ENCODE measurements at regions of chr5 and their contacts with region 1.

Region 1: GRCh38 chr5:159106569-159107282 is 7.0 kb upstream of the EBF1 start:
- DNase-seq: peak; percentile 83
- H3K4me3 ChIP-seq: peak overlapping the region; percentile 61
- H3K27ac ChIP-seq: peak overlapping the region; percentile 53
- H3K4me1 ChIP-seq: peaks cover 49% of the 10 kb centered on the region
- H3K27me3 ChIP-seq: peaks cover 83% of the 10 kb centered on the region
- CTCF ChIP-seq: peak; percentile 92

Region 2: DNA sequence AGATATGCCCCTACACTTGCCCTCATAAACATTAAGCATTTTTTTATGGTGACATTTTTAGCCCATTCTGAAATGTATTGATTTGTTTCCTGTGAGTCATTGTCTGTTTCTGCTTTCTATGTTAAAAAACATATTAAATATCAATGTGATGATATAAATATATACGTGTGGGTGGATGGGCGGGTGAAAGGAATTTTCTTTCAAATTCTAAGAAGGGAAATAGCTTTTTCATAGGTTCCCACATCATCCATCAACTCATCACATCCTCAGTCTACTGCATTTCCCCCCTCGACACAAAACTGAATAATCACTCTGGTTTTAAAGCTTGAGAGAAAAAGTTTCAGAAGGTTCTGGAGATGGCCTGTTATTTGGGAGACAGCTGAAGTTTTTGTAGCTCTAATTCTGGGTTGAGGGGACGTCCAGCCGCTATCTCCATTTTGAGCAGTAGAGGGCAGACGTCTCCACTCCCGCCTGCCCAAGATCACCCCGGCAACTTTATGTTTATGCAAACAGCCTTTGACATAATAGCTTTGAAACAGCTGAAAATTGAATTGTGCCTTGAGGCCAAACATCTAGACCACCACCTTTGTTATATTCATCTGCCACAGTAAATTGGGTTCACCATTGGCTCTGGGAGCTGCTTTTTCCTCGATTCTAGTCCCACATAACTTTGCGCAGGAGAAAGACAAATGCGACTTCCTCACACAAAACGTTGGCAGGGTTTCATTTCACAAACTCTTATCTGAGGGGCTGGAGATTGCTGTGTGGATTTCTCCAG is 1031.5 kb before region 1 on chr5:
- intact Hi-C with region 1: loop called (anchors 5 kb)
- DNase-seq: peak; percentile 44
- H3K4me3 ChIP-seq: peak overlapping the region; percentile 53
- H3K27ac ChIP-seq: peak overlapping the region; percentile 54
- H3K4me1 ChIP-seq: peaks cover 12% of the 10 kb centered on the region
- H3K27me3 ChIP-seq: no peaks in the 10 kb centered on the region
- CTCF ChIP-seq: peak; percentile 90

Region 3: GRCh38 chr5:158174918-158175851 is 931.5 kb before region 1 on chr5:
- intact Hi-C with region 1: loop called (anchors 5 kb)
- DNase-seq: peak; percentile 67
- H3K4me3 ChIP-seq: no peak overlapping the region
- H3K27ac ChIP-seq: peak overlapping the region; percentile 74
- H3K4me1 ChIP-seq: peaks cover 24% of the 10 kb centered on the region
- H3K27me3 ChIP-seq: peaks cover 14% of the 10 kb centered on the region
- CTCF ChIP-seq: peak; percentile 85

Region 4: GRCh38 chr5:158695595-158696330 is 411.0 kb before region 1 on chr5:
- intact Hi-C with region 1: loop called (anchors 2 kb)
- DNase-seq: peak; percentile 72
- H3K4me3 ChIP-seq: no peak overlapping the region
- H3K27ac ChIP-seq: peak overlapping the region; percentile 70
- H3K4me1 ChIP-seq: peaks cover 42% of the 10 kb centered on the region
- H3K27me3 ChIP-seq: peaks cover 25% of the 10 kb centered on the region
- CTCF ChIP-seq: peak; percentile 99

Region 5: DNA sequence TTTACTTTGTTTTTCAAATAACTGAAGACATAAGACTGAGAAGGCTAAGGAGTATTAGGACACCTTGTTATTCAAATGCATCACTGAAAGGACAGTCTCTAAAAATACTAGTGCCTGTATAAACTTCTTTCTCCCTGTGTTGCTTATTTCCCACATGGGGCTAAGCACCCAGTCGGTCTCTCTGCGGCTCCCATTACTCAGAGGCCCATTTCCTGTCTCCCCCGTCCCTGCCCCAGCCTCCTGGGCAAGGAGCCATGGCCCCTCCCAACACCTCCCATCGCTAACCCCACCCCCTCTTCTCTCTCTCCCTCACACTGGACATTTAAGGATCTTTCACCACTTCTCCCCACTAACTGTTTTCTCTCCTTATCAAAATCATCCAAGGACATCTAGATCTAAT is 88.9 kb before region 1 on chr5:
- intact Hi-C with region 1: no loop called
- DNase-seq: peak; percentile 78
- H3K4me3 ChIP-seq: no peak overlapping the region
- H3K27ac ChIP-seq: peak overlapping the region; percentile 78
- H3K4me1 ChIP-seq: peaks cover 62% of the 10 kb centered on the region
- H3K27me3 ChIP-seq: no peaks in the 10 kb centered on the region
- CTCF ChIP-seq: no peak

Region 6: DNA sequence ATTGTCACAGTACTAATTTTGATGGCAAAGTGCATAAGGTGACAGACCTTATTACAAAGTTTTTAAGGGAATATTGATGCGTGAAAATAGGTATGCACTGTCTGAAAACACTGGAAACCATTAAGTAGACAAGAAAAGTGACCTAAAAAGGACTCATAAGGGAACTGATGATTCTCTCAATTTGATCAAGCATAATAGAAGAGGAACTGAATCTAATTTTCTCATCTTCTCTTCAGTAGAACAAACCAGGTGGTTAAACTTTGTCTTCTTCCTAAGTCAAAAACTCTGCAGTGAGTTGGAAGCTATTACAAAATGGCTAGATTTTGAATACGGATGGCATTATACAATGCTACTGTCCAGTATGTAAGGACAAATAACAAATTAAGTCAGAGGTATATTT is 49.2 kb after region 1 on chr5:
- intact Hi-C with region 1: no loop called
- DNase-seq: no peak
- H3K4me3 ChIP-seq: no peak overlapping the region
- H3K27ac ChIP-seq: no peak overlapping the region
- H3K4me1 ChIP-seq: peaks cover 16% of the 10 kb centered on the region
- H3K27me3 ChIP-seq: no peaks in the 10 kb centered on the region
- CTCF ChIP-seq: no peak